CD4-positive, alpha-beta T cell (primary cell): ENCODE measurements at regions of chr17 and their contacts with region 1.

Region 1: GRCh38 chr17:73007407-73007806 is 85.1 kb downstream of the SLC39A11 start:
- DNase-seq: no peak
- ATAC-seq: no peak
- H3K4me3 ChIP-seq: no peak overlapping the region
- H3K4me3 Mint-ChIP-seq: no peak overlapping the region
- H3K27ac ChIP-seq: no peak overlapping the region
- H3K27ac Mint-ChIP-seq: no peak overlapping the region
- H3K4me1 ChIP-seq: peaks cover 7% of the 10 kb centered on the region
- H3K4me1 Mint-ChIP-seq: peaks cover 11% of the 10 kb centered on the region
- H3K27me3 ChIP-seq: no peaks in the 10 kb centered on the region
- H3K27me3 Mint-ChIP-seq: no peaks in the 10 kb centered on the region
- CTCF ChIP-seq: no peak

Region 2: GRCh38 chr17:72631949-72632684 is 375.3 kb before region 1 on chr17:
- CTCF ChIA-PET with region 1: no interaction called
- POLR2A ChIA-PET with region 1: no interaction called
- intact Hi-C with region 1: no loop called
- DNase-seq: no peak
- ATAC-seq: no peak
- H3K4me3 ChIP-seq: no peak overlapping the region
- H3K4me3 Mint-ChIP-seq: no peak overlapping the region
- H3K27ac ChIP-seq: no peak overlapping the region
- H3K27ac Mint-ChIP-seq: no peak overlapping the region
- H3K4me1 ChIP-seq: peaks cover 17% of the 10 kb centered on the region
- H3K4me1 Mint-ChIP-seq: peaks cover 21% of the 10 kb centered on the region
- H3K27me3 ChIP-seq: no peaks in the 10 kb centered on the region
- H3K27me3 Mint-ChIP-seq: no peaks in the 10 kb centered on the region
- CTCF ChIP-seq: no peak

Region 3: DNA sequence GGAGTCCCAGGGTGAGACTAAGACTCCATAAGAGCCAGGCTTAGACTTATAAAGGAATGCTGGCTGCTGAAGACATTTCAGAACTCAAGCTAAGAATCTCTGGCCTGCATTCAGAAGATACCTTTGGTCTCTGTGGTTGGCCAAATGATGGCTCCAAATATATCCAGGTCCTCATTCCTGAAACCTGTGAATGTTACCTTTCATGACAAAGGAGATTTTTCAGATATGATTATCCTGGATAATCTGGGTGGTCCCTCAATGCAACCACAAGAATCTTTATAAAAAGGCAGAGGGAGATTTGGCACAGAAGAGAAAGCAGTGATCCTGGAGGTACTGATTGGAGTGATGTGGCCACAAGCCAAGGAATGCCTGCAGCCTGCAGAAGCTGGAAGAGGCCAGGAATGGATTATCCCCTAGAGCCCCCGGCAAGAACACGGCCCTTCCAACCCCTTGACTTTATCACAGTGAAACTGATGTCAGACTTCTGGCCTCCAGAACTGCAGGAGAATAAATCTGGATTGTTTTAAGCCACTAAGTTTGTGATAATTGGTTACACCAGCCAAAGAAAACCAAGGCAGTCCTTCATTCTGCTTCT is 168.2 kb before region 1 on chr17:
- CTCF ChIA-PET with region 1: no interaction called
- POLR2A ChIA-PET with region 1: no interaction called
- intact Hi-C with region 1: no loop called
- DNase-seq: no peak
- ATAC-seq: no peak
- H3K4me3 ChIP-seq: no peak overlapping the region
- H3K4me3 Mint-ChIP-seq: no peak overlapping the region
- H3K27ac ChIP-seq: no peak overlapping the region
- H3K27ac Mint-ChIP-seq: no peak overlapping the region
- H3K4me1 ChIP-seq: no peaks in the 10 kb centered on the region
- H3K4me1 Mint-ChIP-seq: no peaks in the 10 kb centered on the region
- H3K27me3 ChIP-seq: no peaks in the 10 kb centered on the region
- H3K27me3 Mint-ChIP-seq: no peaks in the 10 kb centered on the region
- CTCF ChIP-seq: no peak

Region 4: GRCh38 chr17:72943826-72944689 is 63.3 kb before region 1 on chr17:
- CTCF ChIA-PET with region 1: no interaction called
- POLR2A ChIA-PET with region 1: no interaction called
- intact Hi-C with region 1: loop called in 1 of 2 experiments (anchors 10 kb)
- DNase-seq: no peak
- ATAC-seq: no peak
- H3K4me3 ChIP-seq: no peak overlapping the region
- H3K4me3 Mint-ChIP-seq: no peak overlapping the region
- H3K27ac ChIP-seq: no peak overlapping the region
- H3K27ac Mint-ChIP-seq: no peak overlapping the region
- H3K4me1 ChIP-seq: no peaks in the 10 kb centered on the region
- H3K4me1 Mint-ChIP-seq: no peaks in the 10 kb centered on the region
- H3K27me3 ChIP-seq: no peaks in the 10 kb centered on the region
- H3K27me3 Mint-ChIP-seq: no peaks in the 10 kb centered on the region
- CTCF ChIP-seq: no peak

Region 5: DNA sequence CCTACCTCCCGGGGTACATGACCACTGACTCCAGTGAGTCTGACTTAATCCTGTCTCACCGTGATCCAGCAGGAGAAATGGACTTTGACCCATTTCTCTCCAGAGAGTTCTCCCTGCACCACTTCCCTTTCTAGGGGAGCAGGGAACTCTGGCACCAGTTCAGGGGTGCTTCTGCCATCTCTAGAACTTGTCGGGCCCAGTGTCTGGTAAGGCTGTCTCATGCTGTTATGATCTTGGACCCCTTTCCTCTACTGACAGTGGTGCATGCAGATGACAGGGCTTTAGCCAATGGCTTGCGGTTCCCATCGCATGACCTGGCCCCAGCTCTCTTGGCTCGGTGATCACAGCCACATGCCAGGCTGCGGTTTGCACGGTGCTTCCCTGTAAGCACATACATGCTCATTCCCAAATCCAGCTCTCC is 23.1 kb after region 1 on chr17:
- CTCF ChIA-PET with region 1: no interaction called
- POLR2A ChIA-PET with region 1: no interaction called
- intact Hi-C with region 1: no loop called
- DNase-seq: no peak
- ATAC-seq: no peak
- H3K4me3 ChIP-seq: no peak overlapping the region
- H3K4me3 Mint-ChIP-seq: no peak overlapping the region
- H3K27ac ChIP-seq: no peak overlapping the region
- H3K27ac Mint-ChIP-seq: no peak overlapping the region
- H3K4me1 ChIP-seq: no peaks in the 10 kb centered on the region
- H3K4me1 Mint-ChIP-seq: no peaks in the 10 kb centered on the region
- H3K27me3 ChIP-seq: no peaks in the 10 kb centered on the region
- H3K27me3 Mint-ChIP-seq: no peaks in the 10 kb centered on the region
- CTCF ChIP-seq: no peak

Region 6: GRCh38 chr17:73083432-73083831 is 76.0 kb after region 1 on chr17:
- CTCF ChIA-PET with region 1: no interaction called
- POLR2A ChIA-PET with region 1: no interaction called
- intact Hi-C with region 1: no loop called
- DNase-seq: no peak
- ATAC-seq: no peak
- H3K4me3 ChIP-seq: no peak overlapping the region
- H3K4me3 Mint-ChIP-seq: no peak overlapping the region
- H3K27ac ChIP-seq: no peak overlapping the region
- H3K27ac Mint-ChIP-seq: no peak overlapping the region
- H3K4me1 ChIP-seq: no peaks in the 10 kb centered on the region
- H3K4me1 Mint-ChIP-seq: peaks cover 12% of the 10 kb centered on the region
- H3K27me3 ChIP-seq: no peaks in the 10 kb centered on the region
- H3K27me3 Mint-ChIP-seq: no peaks in the 10 kb centered on the region
- CTCF ChIP-seq: no peak